Mammary epithelial cell (primary cell): ENCODE measurements at regions of chrX and their contacts with region 1.

Region 1: DNA sequence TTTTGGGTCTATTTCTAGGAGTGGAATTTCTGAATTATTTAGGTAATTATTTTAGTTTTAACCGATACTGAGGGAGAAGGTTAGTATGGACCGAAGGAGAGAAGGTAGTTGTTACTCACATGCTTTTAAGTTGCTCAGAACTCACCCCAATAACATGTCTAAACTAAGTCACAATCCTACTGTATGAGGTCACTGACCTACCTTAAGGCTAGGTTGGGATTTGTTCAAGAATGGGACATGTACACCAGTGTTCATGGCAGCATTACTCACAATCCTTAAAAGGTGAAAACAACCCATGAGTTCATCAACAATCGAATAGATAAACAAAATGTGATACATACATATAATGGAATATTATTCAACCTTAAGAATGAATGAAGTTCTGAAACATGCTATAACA is 90.5 kb downstream of the MSN start:
- DNase-seq: peak; percentile 30
- H3K4me3 ChIP-seq: no peak overlapping the region
- H3K27ac ChIP-seq: peak overlapping the region; percentile 91
- H3K4me1 ChIP-seq: peaks cover 18% of the 10 kb centered on the region
- H3K27me3 ChIP-seq: no peaks in the 10 kb centered on the region
- CTCF ChIP-seq: no peak

Region 2: GRCh38 chrX:65667503-65668376 is 90.2 kb before region 1 on chrX and contains the start of gene MSN:
- CTCF ChIA-PET with region 1: no interaction called
- dilution Hi-C with region 1: no loop called
- in situ Hi-C with region 1: no loop called
- intact Hi-C with region 1: no loop called
- DNase-seq: peak; percentile 55
- H3K4me3 ChIP-seq: peak within 1 kb of the TSS; percentile 43 to 83 (median 78)
- H3K27ac ChIP-seq: peak within 1 kb of the TSS; percentile 90
- H3K4me1 ChIP-seq: peaks cover 5% of the 10 kb centered on the region
- H3K27me3 ChIP-seq: no peaks in the 10 kb centered on the region
- CTCF ChIP-seq: no peak
- total RNA-seq, gene MSN: 261 to 317 TPM

Region 3: DNA sequence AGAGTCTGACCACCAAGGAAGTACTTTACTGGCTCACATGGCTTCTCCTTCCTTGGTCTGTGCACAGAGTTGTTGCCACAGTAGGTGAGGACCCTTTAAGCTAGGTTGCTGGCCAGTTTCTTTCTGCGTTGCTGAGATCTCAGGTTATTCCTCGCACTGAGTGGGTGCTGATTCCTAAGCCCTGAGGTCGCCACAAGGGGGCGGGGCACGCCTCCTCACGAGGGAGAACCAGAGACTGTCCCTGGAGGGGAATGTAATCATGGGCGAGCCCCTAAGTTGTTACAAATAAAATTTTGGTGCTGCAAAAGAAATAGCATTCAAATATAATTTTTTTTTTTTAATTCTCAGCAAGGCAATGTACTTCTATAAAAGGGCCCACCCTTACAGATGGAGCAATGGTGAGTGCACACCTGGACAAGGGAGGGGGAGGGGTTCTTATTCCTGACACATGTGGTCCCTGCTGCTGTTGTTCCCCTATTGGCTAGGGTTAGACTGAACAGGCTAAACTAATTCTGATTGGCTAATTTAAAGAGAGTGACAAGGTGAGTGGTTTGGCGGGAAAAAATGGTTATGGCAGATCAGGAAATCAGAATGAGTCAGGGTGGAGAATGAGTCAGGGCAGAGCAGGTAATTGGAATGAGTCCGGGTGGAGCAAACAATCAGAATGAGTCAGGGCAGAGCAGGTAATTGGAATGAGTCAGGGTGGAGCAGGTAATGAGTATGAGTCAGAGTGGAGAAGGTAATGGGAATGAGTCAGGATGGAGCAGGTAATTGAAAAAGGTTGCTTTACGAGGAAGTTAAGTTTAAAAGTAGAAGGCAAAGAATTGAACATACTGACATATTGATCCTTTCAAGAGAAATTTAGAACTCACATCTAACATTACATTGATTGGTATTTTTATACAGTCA is 174.5 kb after region 1 on chrX:
- CTCF ChIA-PET with region 1: no interaction called
- dilution Hi-C with region 1: no loop called
- in situ Hi-C with region 1: no loop called
- intact Hi-C with region 1: loop called (anchors 1 kb)
- DNase-seq: peak; percentile 93
- H3K4me3 ChIP-seq: no peak overlapping the region
- H3K27ac ChIP-seq: peak overlapping the region; percentile 75
- H3K4me1 ChIP-seq: peaks cover 6% of the 10 kb centered on the region
- H3K27me3 ChIP-seq: no peaks in the 10 kb centered on the region
- CTCF ChIP-seq: no peak